Vagina (tissue), 2 donors: ENCODE measurements at regions of chr10 and their contacts with region 1.

Region 1: GRCh38 chr10:110304780-110305421 is at the start of gene SMNDC1:
- DNase-seq: peak; percentile 98
- H3K4me3 ChIP-seq: peak within 1 kb of the TSS; percentile 96 to 99
- H3K27ac ChIP-seq: peak within 1 kb of the TSS; percentile 95
- H3K4me1 ChIP-seq: peaks cover 44% of the 10 kb centered on the region
- H3K27me3 ChIP-seq: no peaks in the 10 kb centered on the region
- CTCF ChIP-seq: peak in 1 of 3 experiments; percentile 34
- POLR2A ChIP-seq: peak in 1 of 2 donors; percentile 54
- total RNA-seq, gene SMNDC1: 12.3 TPM

Region 2: GRCh38 chr10:109866168-109866994 is 438.5 kb before region 1 on chr10:
- intact Hi-C with region 1: no loop called
- DNase-seq: peak; percentile 49 to 82
- H3K4me3 ChIP-seq: no peak overlapping the region
- H3K27ac ChIP-seq: no peak overlapping the region
- H3K4me1 ChIP-seq: no peaks in the 10 kb centered on the region
- H3K27me3 ChIP-seq: no peaks in the 10 kb centered on the region
- CTCF ChIP-seq: no peak
- POLR2A ChIP-seq: no peak

Region 3: DNA sequence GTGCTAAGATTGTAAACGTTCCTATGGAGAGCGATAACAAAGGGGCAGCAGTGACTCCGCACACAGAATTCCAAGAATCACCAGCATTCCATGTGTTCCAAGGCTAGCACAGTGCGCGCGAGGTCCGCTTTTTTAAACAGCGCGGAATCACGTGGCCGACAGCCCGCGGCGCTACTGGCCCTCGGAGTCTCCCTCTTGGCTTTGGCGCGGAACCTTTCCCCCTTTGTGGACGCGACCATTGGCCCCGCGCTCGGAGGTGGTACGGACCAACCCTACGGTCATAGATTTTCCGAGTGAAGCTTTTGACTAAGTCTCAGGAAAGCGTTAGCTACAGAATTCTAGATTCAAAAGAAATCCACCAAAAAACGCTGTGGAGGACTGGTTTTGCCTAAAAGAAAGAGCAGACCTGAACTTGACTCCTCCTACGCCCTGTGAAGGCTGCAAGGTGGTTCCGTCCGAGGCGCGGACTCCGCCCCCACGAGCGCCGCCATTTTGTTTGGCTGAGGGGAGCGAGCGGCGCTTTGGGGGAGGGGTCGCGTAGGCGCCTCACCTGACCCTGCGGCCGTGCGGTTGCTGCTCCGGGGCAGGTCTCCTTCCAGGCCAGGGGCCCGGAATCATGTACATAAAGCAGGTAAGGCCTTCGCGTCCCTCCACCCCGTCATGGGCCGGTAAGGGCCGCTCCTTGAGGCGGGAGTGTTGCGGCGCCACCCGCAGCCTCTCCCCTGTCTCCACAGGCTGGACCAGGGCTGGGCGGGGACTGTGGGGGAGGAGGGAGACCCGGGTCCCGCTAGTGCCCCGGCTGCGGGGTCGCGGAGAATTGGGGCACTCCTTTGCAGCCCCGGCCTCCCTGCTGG is 262.5 kb after region 1 on chr10 and contains the start of gene SMC3:
- intact Hi-C with region 1: loop called (anchors 10 kb)
- DNase-seq: peak in 1 of 2 donors; percentile 90
- H3K4me3 ChIP-seq: peak within 1 kb of the TSS; percentile 94 to 95
- H3K27ac ChIP-seq: peak within 1 kb of the TSS; percentile 92
- H3K4me1 ChIP-seq: peaks cover 42% of the 10 kb centered on the region
- H3K27me3 ChIP-seq: no peaks in the 10 kb centered on the region
- CTCF ChIP-seq: peak in 1 of 3 experiments; percentile 17
- POLR2A ChIP-seq: peak in 1 of 2 donors; percentile 42
- total RNA-seq, gene SMC3: 27.5 TPM